ENCODE measurements at regions of chr2 and their contacts with region 1.

Region 1: GRCh38 chr2:4134551-4135550 is 431.5 kb downstream of the DCDC2C start:
- DNase-seq: no peak
- H3K4me3 ChIP-seq: no peak overlapping the region
- H3K27ac ChIP-seq: no peak overlapping the region
- H3K4me1 ChIP-seq: no peaks in the 10 kb centered on the region
- H3K27me3 ChIP-seq: no peaks in the 10 kb centered on the region
- CTCF ChIP-seq: no peak
- EP300 ChIP-seq: no peak
- POLR2A ChIP-seq: no peak

Region 2: DNA sequence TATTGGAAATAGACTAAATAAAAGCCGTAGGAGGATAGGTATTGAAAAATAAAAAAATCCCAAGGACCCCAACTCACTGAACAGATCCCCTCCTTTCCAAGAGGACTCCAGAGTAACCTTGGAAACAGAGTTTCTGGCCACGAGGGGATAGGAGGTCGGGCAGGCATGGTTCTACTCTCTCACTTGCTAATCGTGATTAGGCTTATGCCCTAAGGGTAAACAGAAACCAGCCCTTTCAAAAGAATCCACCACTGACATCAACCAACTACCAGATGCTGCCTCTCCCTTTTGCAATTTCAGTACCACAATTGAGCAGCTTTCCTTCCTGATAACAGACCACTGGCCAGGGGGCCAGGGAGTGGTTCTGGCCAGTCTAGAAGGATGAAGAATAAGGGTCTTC is 1235.0 kb before region 1 on chr2:
- intact Hi-C with region 1: loop called in 1 of 4 experiments (anchors 5 kb)
- DNase-seq: no peak
- H3K4me3 ChIP-seq: no peak overlapping the region
- H3K27ac ChIP-seq: no peak overlapping the region
- H3K4me1 ChIP-seq: no peaks in the 10 kb centered on the region
- H3K27me3 ChIP-seq: no peaks in the 10 kb centered on the region
- CTCF ChIP-seq: no peak
- EP300 ChIP-seq: no peak
- POLR2A ChIP-seq: no peak

Region 3: DNA sequence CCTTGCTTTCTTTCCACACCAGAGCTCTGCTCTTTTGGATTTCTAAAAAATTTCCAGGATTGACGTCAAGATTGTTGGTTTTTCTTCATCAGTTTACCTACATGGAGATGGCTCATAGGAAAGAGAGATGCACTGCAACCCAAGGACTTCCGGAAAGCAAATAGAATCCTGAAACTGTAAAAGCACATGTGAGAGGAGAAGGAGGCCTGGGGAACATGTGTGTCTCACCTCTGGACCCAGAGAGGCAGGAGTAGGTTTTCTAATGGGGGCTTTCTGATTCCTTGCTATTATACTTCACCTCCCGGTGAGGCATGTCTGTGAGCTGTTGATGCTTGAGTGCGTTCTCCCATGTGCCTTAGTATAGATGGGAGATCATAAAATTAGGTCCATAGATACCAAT is 68.6 kb before region 1 on chr2:
- intact Hi-C with region 1: no loop called
- DNase-seq: no peak
- H3K4me3 ChIP-seq: no peak overlapping the region
- H3K27ac ChIP-seq: no peak overlapping the region
- H3K4me1 ChIP-seq: no peaks in the 10 kb centered on the region
- H3K27me3 ChIP-seq: no peaks in the 10 kb centered on the region
- CTCF ChIP-seq: no peak
- EP300 ChIP-seq: no peak
- POLR2A ChIP-seq: no peak

Region 4: DNA sequence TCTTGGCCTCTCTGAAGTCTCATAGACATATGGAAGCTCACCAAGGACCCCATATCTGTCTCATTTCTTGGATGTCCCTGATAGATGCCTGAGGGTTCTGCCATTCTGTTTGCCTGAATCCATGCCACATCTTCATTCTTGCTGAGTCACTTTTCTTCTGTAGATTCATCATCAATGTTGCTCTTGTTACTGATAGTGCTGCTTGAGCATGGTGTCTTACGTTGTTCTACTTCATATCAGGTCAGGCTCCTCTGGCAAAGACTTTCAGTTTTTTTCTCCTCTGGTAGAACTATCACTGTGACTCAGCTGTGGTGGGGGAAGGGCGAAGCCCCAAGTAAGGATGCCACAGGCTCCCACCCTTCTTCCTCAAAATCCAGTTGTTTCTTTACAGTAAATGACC is 453.8 kb after region 1 on chr2:
- intact Hi-C with region 1: no loop called
- DNase-seq: no peak
- H3K4me3 ChIP-seq: no peak overlapping the region
- H3K27ac ChIP-seq: no peak overlapping the region
- H3K4me1 ChIP-seq: no peaks in the 10 kb centered on the region
- H3K27me3 ChIP-seq: no peaks in the 10 kb centered on the region
- CTCF ChIP-seq: no peak
- EP300 ChIP-seq: no peak
- POLR2A ChIP-seq: no peak

Region 5: DNA sequence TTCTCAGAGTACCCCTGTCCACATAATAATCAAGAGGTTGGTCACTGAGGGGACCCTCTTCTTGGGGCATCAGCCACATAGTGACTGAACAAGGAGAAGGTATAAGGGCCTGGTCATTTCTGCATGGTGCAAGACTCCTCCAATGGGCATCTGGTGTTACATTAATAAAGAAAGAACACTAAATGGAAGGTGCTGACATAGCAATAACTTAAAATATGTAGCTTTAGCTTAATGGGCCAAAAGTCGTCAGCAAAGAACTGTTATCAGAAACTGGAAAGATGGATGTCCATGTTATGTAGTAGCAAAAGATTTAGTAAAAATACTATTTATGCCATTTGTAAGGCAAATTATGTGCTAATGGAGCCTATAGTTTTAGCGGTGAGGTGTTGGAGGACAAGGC is 640.8 kb after region 1 on chr2:
- intact Hi-C with region 1: no loop called
- DNase-seq: no peak
- H3K4me3 ChIP-seq: no peak overlapping the region
- H3K27ac ChIP-seq: no peak overlapping the region
- H3K4me1 ChIP-seq: no peaks in the 10 kb centered on the region
- H3K27me3 ChIP-seq: no peaks in the 10 kb centered on the region
- CTCF ChIP-seq: no peak
- EP300 ChIP-seq: no peak
- POLR2A ChIP-seq: no peak